A673 (cell line): ENCODE measurements at regions of chr2 and their contacts with region 1.

Region 1: GRCh38 chr2:29753671-29754444 is 167.5 kb downstream of the ALK start:
- DNase-seq: no peak
- H3K4me3 ChIP-seq: no peak overlapping the region
- H3K27ac ChIP-seq: no peak overlapping the region
- H3K4me1 ChIP-seq: peaks cover 9% of the 10 kb centered on the region
- H3K27me3 ChIP-seq: no peaks in the 10 kb centered on the region
- CTCF ChIP-seq: no peak

Region 2: GRCh38 chr2:28338046-28338817 is 1415.6 kb before region 1 on chr2:
- CTCF ChIA-PET with region 1: no interaction called
- POLR2A ChIA-PET with region 1: no interaction called
- intact Hi-C with region 1: loop called (anchors 5 kb)
- DNase-seq: no peak
- H3K4me3 ChIP-seq: no peak overlapping the region
- H3K27ac ChIP-seq: no peak overlapping the region
- H3K4me1 ChIP-seq: peaks cover 6% of the 10 kb centered on the region
- H3K27me3 ChIP-seq: no peaks in the 10 kb centered on the region
- CTCF ChIP-seq: no peak

Region 3: GRCh38 chr2:29398384-29399237 is 355.2 kb before region 1 on chr2:
- CTCF ChIA-PET with region 1: no interaction called
- POLR2A ChIA-PET with region 1: no interaction called
- intact Hi-C with region 1: loop called (anchors 5 kb)
- DNase-seq: peak; percentile 89
- H3K4me3 ChIP-seq: no peak overlapping the region
- H3K27ac ChIP-seq: no peak overlapping the region
- H3K4me1 ChIP-seq: peaks cover 38% of the 10 kb centered on the region
- H3K27me3 ChIP-seq: peaks cover 7% of the 10 kb centered on the region
- CTCF ChIP-seq: no peak

Region 4: GRCh38 chr2:29723255-29724001 is 30.4 kb before region 1 on chr2:
- CTCF ChIA-PET with region 1: no interaction called
- POLR2A ChIA-PET with region 1: no interaction called
- intact Hi-C with region 1: no loop called
- DNase-seq: no peak
- H3K4me3 ChIP-seq: no peak overlapping the region
- H3K27ac ChIP-seq: no peak overlapping the region
- H3K4me1 ChIP-seq: peaks cover 17% of the 10 kb centered on the region
- H3K27me3 ChIP-seq: no peaks in the 10 kb centered on the region
- CTCF ChIP-seq: no peak